Activated CD4-positive, alpha-beta T cell treated with anti-CD3 and anti-CD28 coated beads, Interleukin-2, amount 10 ng/mL, durations not matched to agents 7 days and 5 days (primary cell): ENCODE measurements at regions of chr14 and their contacts with region 1.

Region 1: GRCh38 chr14:60753264-60754119 is 18.9 kb downstream of the MNAT1 start:
- DNase-seq: peak; percentile 85
- H3K4me3 Mint-ChIP-seq: peak overlapping the region; percentile 49
- H3K27ac Mint-ChIP-seq: peak overlapping the region; percentile 85
- H3K4me1 Mint-ChIP-seq: peaks cover 51% of the 10 kb centered on the region
- H3K27me3 Mint-ChIP-seq: peaks cover 13% of the 10 kb centered on the region

Region 2: DNA sequence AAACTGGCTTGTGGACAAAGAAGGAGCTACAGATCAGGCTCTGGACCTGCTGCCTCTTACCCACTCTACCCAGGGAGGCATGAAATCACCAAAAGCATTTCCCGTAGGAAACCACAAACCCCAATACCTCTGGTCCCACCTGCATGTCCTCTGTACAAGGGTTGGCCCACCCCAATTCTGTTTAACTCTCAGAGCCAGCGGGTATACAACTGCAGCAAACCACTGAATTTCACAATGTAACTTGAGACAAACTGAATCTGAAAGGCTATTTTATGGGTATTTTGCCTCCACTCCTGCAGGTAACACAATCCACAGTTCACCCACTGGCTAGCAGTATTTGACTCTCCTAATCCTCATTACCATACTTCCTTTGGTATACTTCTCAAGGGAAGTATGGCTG is 120.7 kb before region 1 on chr14:
- CTCF ChIA-PET with region 1: no interaction called
- POLR2A ChIA-PET with region 1: interaction called, 17 read pairs
- DNase-seq: no peak
- H3K4me3 Mint-ChIP-seq: no peak overlapping the region
- H3K27ac Mint-ChIP-seq: no peak overlapping the region
- H3K4me1 Mint-ChIP-seq: peaks cover 13% of the 10 kb centered on the region
- H3K27me3 Mint-ChIP-seq: peaks cover 52% of the 10 kb centered on the region